Activated CD8-positive, alpha-beta memory T cell treated with anti-CD3 and anti-CD28 coated beads, Interleukin-2, amount 10 ng/mL, durations not matched to agents 7 days and 5 days (primary cell): ENCODE measurements at regions of chr17 and their contacts with region 1.

Region 1: DNA sequence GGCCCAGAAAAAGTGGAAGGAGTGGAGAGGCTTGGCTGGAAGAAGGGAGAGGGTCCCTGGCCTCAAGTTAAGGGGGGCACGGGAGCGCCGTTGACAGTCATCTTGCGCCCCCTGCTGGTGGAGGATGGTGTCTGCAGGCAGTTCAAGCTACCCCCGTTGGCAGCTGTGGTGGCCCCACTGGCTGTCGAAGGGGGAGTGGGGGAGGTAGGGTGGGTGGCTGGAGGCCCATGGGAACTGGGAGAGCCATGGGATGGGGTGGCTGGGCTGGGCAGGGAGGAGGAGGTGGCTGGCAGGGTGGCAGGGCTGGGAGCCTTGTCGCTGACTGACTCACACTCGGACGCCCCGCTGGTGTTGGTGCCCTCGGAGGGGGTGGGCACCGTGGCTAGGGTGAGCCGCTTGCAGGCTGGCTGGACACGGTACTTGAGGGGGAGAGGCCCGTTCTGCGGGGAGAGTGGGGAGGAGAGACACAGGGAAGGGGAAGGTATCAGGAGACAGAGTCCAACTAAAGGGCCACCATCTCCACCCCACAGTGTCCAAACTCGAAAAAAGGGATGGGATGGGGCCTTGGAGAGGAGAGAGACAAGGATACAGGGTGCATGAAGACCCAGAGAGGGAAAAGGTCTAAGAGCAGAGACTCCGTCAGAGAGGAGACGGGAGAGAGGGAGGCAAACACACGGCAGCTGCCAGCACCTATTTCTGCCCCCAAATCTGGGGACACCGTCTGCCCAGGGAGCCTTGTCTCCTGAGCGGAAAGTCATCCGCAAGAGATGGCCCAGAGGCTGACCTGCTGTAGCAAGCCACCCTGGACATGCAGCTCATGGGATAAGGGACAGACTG is 5.2 kb downstream of the CISD3 start:
- DNase-seq: peak; percentile 77
- ATAC-seq: peak; percentile 18
- H3K4me3 Mint-ChIP-seq: no peak overlapping the region
- H3K27ac Mint-ChIP-seq: no peak overlapping the region
- H3K4me1 Mint-ChIP-seq: peaks cover 39% of the 10 kb centered on the region
- H3K27me3 Mint-ChIP-seq: no peaks in the 10 kb centered on the region

Region 2: GRCh38 chr17:38693700-38694329 is 41.6 kb before region 1 on chr17:
- CTCF ChIA-PET with region 1: interaction called, 36 read pairs
- DNase-seq: no peak
- ATAC-seq: no peak
- H3K4me3 Mint-ChIP-seq: no peak overlapping the region
- H3K27ac Mint-ChIP-seq: no peak overlapping the region
- H3K4me1 Mint-ChIP-seq: peaks cover 23% of the 10 kb centered on the region
- H3K27me3 Mint-ChIP-seq: no peaks in the 10 kb centered on the region

Region 3: GRCh38 chr17:38709864-38710603 is 25.3 kb before region 1 on chr17:
- CTCF ChIA-PET with region 1: interaction called, 29 read pairs
- DNase-seq: no peak
- ATAC-seq: no peak
- H3K4me3 Mint-ChIP-seq: no peak overlapping the region
- H3K27ac Mint-ChIP-seq: no peak overlapping the region
- H3K4me1 Mint-ChIP-seq: peaks cover 58% of the 10 kb centered on the region
- H3K27me3 Mint-ChIP-seq: no peaks in the 10 kb centered on the region

Region 4: GRCh38 chr17:38724337-38724988 is 10.9 kb before region 1 on chr17:
- CTCF ChIA-PET with region 1: interaction called, 13 read pairs
- DNase-seq: no peak
- ATAC-seq: no peak
- H3K4me3 Mint-ChIP-seq: no peak overlapping the region
- H3K27ac Mint-ChIP-seq: no peak overlapping the region
- H3K4me1 Mint-ChIP-seq: peaks cover 34% of the 10 kb centered on the region
- H3K27me3 Mint-ChIP-seq: no peaks in the 10 kb centered on the region

Region 5: GRCh38 chr17:38853292-38854219 is 118.2 kb after region 1 on chr17 and contains the start of gene RPL23:
- CTCF ChIA-PET with region 1: no interaction called
- DNase-seq: peak; percentile 96
- ATAC-seq: peak; percentile 88
- H3K4me3 Mint-ChIP-seq: peak within 1 kb of the TSS; percentile 97
- H3K27ac Mint-ChIP-seq: peak within 1 kb of the TSS; percentile 98
- H3K4me1 Mint-ChIP-seq: peaks cover 42% of the 10 kb centered on the region
- H3K27me3 Mint-ChIP-seq: no peaks in the 10 kb centered on the region
- total RNA-seq, gene RPL23: 831 to 1,130 TPM